CD14-positive monocyte (primary cell): ENCODE measurements at regions of chr7 and their contacts with region 1.

Region 1: DNA sequence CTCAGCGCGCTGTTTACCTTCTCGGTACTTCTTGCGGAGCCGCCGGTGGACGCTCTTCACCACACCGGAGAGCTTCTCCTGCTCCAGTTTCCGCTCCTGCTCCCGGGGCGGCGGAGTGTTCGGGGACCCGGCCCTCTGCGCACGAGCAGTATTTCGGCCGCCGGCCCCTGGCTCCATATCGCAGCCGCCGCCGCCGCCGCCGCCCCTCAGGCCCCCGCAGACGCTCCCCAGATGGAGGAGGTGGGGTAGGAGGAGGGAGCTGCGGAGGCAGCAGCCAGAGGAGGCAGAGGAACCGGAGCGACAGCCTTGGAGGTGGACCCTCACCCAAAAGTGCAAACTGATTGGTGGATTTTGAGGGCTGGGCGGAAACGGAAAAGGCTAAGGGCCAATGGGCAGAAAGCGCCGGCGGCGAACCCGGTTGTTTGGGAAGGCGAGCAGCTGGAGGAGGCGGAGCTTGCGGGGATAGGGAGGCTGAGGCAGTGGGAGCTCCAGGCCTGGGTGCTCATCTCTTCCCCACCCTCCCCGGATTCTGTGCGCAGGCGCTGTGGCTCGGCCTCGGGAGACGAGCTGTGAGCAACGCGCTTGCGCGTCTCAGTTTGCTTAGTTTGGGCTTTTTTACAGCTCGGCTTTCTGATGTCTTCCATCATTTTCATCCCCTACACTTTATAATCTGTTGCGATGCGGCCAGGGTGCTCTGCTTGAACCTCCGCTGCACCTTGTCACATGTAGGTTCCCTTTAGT is 146.9 kb downstream of the GPR85 start:
- DNase-seq: peak; percentile 98
- H3K4me3 ChIP-seq: peak overlapping the region; percentile 77 to 97 (median 84)
- H3K4me3 Mint-ChIP-seq: peak overlapping the region; percentile 84 to 99
- H3K27ac ChIP-seq: peak overlapping the region; percentile 63 to 81
- H3K27ac Mint-ChIP-seq: peak overlapping the region; percentile 87 to 98 (median 92)
- H3K4me1 ChIP-seq: peaks cover 17 to 30% of the 10 kb centered on the region in 2 donors
- H3K4me1 Mint-ChIP-seq: peaks cover 28% of the 10 kb centered on the region
- H3K27me3 ChIP-seq: peaks cover 0 to 3% of the 10 kb centered on the region in 2 donors
- H3K27me3 Mint-ChIP-seq: peaks cover 2 to 6% (median 3%) of the 10 kb centered on the region in 3 donors
- CTCF ChIP-seq: no peak

Region 2: DNA sequence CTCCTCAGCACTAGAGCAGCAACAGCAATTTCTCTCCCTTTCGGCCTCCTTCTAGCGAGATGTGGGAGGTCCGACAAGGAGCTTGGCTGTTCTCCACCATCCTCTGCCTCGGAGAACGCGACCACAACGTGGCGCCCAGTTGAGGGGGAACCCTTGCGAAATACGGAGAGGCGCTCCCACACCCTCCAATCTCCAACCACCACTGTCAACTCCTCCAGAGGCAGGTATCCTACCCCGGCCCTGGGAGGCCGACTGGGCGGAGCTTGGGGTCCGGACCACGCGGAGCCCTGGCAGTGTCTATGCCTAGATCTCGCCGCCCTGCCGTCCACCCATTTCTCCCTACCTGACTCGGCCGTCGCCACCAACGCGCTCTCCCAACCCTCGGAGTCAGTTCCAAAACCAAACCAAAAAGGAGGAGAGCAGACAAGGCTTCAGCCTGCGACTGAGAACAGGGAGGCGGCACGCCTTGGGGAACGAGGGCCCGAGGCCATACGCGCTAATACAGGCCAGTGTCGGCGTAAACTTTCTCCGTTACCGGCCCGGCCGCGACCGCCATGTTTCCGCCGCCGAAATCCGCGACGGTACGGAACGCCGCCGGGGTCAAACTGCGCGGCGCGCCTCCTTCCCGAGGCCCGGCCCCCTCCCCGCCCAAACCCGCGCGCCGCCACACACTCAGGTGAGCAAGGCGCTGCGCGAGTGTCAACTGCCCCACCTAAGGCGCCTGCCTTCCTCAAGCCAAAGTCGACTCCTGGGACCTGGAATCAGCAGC is 149.7 kb before region 1 on chr7 and contains the start of gene TMEM168:
- intact Hi-C with region 1: loop called in 1 of 2 experiments (anchors 5 kb)
- DNase-seq: peak; percentile 46 to 65 (median 61)
- H3K4me3 ChIP-seq: peak within 1 kb of the TSS; percentile 56 to 94 (median 79)
- H3K4me3 Mint-ChIP-seq: peak within 1 kb of the TSS; percentile 88 to 91
- H3K27ac ChIP-seq: peak within 1 kb of the TSS; percentile 84 to 96
- H3K27ac Mint-ChIP-seq: peak within 1 kb of the TSS; percentile 91 to 97 (median 94)
- H3K4me1 ChIP-seq: peaks cover 13 to 22% of the 10 kb centered on the region in 2 donors
- H3K4me1 Mint-ChIP-seq: peaks cover 24% of the 10 kb centered on the region
- H3K27me3 ChIP-seq: no peaks in the 10 kb centered on the region
- H3K27me3 Mint-ChIP-seq: no peaks in the 10 kb centered on the region
- CTCF ChIP-seq: no peak
- polyA plus RNA-seq, gene TMEM168: 7.0 to 14.7 (median 14.6) TPM